ENCODE measurements at regions of chr14 and their contacts with region 1.

Region 1: DNA sequence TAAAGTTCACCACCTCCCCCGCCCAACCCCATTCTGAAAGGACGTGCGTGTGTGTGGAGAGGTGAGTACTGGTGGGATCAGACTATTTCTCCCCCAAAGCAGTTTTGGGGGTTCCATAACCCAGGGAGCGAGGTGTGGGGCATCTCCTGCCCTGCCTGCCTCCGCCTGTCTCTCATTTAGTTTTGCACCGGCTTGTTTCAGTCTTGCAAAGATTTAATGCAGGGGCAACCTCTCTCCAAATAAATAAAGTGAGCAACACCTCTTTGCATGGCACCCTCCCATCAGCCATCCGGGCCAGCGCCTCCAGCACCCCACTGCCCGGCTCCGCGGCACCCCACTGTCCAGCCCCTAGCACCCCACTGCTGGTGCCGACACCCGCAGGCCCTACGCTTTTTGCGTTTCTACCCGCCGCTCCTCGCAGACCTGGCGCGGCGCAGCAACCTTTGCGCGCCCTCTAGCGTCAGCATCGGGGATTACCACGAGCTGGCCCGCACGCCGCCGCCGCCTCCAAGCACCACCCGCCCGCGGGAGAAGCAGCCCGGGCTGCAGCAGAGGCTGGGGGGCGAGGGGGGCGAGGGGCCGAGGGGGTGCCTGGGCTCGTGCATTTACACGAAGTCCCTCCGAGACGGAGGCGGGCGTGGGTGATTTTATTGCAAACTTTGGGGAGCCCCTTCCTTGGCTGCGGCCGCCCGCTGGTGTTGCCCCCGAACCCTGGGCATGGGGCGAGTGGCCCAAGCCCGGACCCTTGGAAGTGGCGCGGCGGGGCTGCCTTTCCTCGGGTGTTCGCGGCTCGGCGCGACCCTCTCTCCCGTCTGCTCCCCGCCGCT is 55.8 kb upstream of the VRK1 start:
- DNase-seq: peak; percentile 94
- H3K4me3 ChIP-seq: peak overlapping the region in 7 of 8 donors; percentile 21 to 69 (median 38)
- H3K27ac ChIP-seq: no peak overlapping the region
- H3K4me1 ChIP-seq: peaks cover 3 to 27% (median 11%) of the 10 kb centered on the region in 6 donors
- H3K27me3 ChIP-seq: peaks cover 0 to 94% (median 39%) of the 10 kb centered on the region in 7 donors
- CTCF ChIP-seq: peak; percentile 40 to 97 (median 91)
- POLR2A ChIP-seq: no peak

Region 2: GRCh38 chr14:96584199-96584906 is 157.0 kb before region 1 on chr14:
- intact Hi-C with region 1: loop called (anchors 5 kb)
- DNase-seq: peak; percentile 80
- H3K4me3 ChIP-seq: no peak overlapping the region
- H3K27ac ChIP-seq: no peak overlapping the region
- H3K4me1 ChIP-seq: peaks cover 4 to 37% (median 12%) of the 10 kb centered on the region in 6 donors
- H3K27me3 ChIP-seq: peaks cover 0 to 52% (median 0%) of the 10 kb centered on the region in 7 donors
- CTCF ChIP-seq: peak in 10 of 11 experiments; percentile 13 to 74 (median 61)
- POLR2A ChIP-seq: no peak

Measured in spleen (tissue), 13 donors.